ENCODE measurements at regions of chr16 and their contacts with region 1.

Region 1: GRCh38 chr16:58197314-58198012 is 443 bp downstream of the CSNK2A2 start:
- DNase-seq: peak; percentile 35

Region 2: DNA sequence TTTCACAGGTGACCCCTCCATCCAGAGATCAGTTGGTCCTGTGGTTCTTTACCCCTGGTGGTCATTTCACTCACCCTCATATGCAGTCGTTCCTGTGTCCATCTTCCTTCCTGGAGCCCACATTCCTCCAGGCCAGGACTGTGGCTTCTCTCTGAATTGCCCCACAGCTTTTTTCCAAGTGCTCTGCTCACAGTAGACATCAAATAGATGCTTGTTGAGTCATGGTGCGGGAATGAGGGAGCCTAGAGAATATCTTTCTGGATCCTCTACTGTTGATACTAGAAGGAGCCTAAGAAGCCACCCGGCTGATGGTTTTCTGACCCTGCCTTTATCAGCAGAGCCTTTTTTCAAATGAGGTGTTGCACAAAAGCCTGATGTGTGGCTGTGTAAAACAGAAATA is 185.8 kb before region 1 on chr16:
- CTCF ChIA-PET with region 1: no interaction called
- POLR2A ChIA-PET with region 1: no interaction called
- DNase-seq: no peak

Region 3: GRCh38 chr16:58249780-58250478 is 52.5 kb after region 1 on chr16:
- CTCF ChIA-PET with region 1: no interaction called
- POLR2A ChIA-PET with region 1: interaction called, 11 read pairs
- DNase-seq: peak; percentile 95

Measured in HEK293T (cell line).